Body of pancreas (tissue), 4 donors: ENCODE measurements at regions of chr11 and their contacts with region 1.

Region 1: DNA sequence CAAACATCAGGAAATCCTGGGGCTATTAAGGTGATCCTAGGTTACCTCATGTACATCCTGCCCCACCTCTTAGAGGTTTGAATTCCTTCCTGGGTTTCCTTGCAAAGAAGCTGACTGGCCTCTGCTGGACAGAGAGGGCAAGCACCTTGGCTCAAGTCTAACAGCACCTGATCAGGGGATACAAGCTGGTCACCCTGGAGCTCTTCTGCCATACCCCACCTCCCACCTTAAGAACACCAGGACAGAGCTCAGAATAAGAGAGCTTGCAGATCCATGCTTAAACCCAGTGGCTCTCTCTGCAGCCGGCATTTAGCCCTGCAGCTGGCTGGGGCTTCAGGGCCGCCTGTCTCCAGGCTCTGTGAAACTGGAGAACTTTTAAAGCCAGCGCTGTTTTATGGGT is 386.6 kb upstream of the NARS2 start:
- DNase-seq: peak; percentile 38 to 64 (median 58)
- ATAC-seq: peak; percentile 89
- H3K4me3 ChIP-seq: no peak overlapping the region
- H3K27ac ChIP-seq: no peak overlapping the region
- H3K4me1 ChIP-seq: no peaks in the 10 kb centered on the region
- H3K27me3 ChIP-seq: peaks cover 0 to 10% of the 10 kb centered on the region in 2 donors
- CTCF ChIP-seq: peak in 6 of 7 experiments; percentile 32 to 76 (median 68)
- POLR2A ChIP-seq: no peak

Region 2: GRCh38 chr11:78651923-78652842 is 309.1 kb before region 1 on chr11:
- intact Hi-C with region 1: loop called (anchors 5 kb)
- DNase-seq: no peak
- ATAC-seq: no peak
- H3K4me3 ChIP-seq: no peak overlapping the region
- H3K27ac ChIP-seq: no peak overlapping the region
- H3K4me1 ChIP-seq: no peaks in the 10 kb centered on the region
- H3K27me3 ChIP-seq: no peaks in the 10 kb centered on the region
- CTCF ChIP-seq: no peak
- POLR2A ChIP-seq: no peak